Left ventricle myocardium superior (tissue), 1 donor: ENCODE measurements at regions of chr13 and their contacts with region 1.

Region 1: DNA sequence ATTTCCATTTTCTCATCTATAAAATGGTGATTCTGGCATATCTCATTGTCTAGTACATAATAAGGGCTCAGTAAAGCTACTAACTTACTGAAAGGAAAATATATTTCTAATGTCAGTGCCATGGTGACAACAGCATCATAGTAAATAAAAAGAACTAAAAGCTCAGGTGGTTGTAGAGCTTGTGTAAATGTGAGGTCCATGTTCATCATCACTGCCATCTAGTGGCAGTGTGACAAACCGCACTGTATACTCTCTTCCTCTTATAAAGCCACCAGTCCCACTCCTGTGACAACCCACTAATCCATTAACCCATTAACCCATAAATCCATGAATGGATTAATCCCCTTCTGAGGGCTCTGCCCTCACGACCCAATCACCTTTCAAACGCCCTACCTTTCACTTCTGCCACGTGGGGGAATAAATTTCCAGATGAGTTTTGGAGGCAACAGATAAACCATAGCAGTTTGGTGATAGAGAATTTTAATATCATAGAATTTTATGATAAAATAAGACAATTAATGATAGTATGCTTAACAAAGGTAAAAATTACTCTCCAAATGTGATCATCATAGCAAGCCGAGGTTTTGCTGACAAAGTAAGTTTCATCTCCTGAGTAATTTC is 160.4 kb upstream of the SGCG start:
- DNase-seq: no peak
- ATAC-seq: peak; percentile 66

Region 2: DNA sequence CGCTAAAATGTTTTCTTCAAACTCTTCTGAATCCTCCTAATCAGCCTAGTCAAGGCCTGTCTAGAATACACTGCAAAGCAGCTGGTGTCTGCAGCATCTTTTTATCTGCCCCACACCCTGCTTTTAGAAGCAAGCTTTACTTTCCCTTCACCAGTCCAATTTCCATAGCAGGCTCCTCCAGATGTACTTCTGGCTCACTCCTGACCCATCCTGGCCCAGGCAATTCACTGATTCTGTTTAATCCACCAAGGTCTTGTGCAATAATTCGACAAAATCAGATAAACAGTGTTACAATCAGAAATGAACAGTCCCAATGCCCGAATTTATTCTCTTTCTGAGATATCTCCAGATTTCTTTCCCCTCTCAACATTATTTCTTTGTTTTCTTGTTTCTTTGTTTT is 254.8 kb before region 1 on chr13:
- intact Hi-C with region 1: no loop called
- DNase-seq: no peak
- ATAC-seq: peak; percentile 45

Region 3: DNA sequence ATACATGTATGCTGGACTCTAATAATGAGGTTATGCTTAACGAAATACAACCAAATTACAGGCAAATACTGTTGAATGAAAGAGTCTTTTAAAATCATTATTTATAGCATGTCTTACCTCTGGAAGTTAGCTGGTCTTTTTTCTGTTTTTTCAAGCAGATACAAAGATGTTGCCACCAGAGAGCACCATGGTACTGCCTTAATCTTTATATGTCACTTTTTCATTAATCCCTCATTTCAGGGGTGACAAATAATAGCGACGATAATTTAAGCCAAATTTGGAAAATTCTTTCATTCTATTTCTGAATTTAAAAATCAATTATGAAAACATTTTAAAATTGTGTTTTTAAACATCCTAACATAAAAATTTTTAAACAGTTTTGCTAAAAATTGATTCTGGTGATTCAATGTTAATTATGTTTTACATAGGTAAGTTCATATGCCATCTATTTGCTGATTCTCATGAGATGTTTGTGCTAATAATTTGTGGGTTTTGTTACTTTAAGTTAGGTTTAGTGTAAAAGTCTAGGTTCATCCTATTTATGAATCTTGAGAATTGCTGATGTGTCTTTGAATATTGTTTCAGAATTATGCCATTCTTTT is 218.8 kb before region 1 on chr13:
- intact Hi-C with region 1: loop called (anchors 10 kb)
- DNase-seq: no peak
- ATAC-seq: no peak